ENCODE measurements at regions of chr12 and their contacts with region 1.

Region 1: GRCh38 chr12:38324896-38325295 is 8.3 kb downstream of the ALG10B start:
- DNase-seq: no peak
- H3K4me3 ChIP-seq: no peak overlapping the region
- H3K27ac ChIP-seq: no peak overlapping the region
- H3K4me1 ChIP-seq: no peaks in the 10 kb centered on the region
- H3K27me3 ChIP-seq: no peaks in the 10 kb centered on the region
- CTCF ChIP-seq: no peak
- POLR2A ChIP-seq: no peak

Region 2: DNA sequence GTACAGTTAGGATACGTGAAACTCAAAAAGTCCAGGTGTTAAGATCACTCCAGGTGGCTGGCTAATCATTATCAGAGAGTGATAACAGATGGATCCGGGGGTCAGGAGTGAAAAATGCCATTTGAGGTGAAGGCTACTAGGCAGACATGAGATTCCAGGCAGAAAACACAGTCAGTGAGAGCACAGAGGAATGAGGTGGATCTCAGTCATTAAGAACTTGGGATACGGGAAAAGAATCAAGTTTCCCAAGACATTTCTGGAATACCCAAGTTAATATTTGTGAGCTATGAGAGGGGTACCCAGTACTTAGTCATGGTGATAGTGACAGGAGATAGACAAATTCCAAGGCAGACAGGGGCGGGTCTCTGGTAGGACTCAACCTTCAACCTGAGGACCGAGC is 102.9 kb before region 1 on chr12:
- intact Hi-C with region 1: no loop called
- DNase-seq: no peak
- H3K4me3 ChIP-seq: no peak overlapping the region
- H3K27ac ChIP-seq: no peak overlapping the region
- H3K4me1 ChIP-seq: no peaks in the 10 kb centered on the region
- H3K27me3 ChIP-seq: no peaks in the 10 kb centered on the region
- CTCF ChIP-seq: no peak
- POLR2A ChIP-seq: no peak

Region 3: GRCh38 chr12:39103552-39104165 is 778.8 kb after region 1 on chr12:
- intact Hi-C with region 1: loop called (anchors 5 kb)
- DNase-seq: peak; percentile 40
- H3K4me3 ChIP-seq: no peak overlapping the region
- H3K27ac ChIP-seq: no peak overlapping the region
- H3K4me1 ChIP-seq: no peaks in the 10 kb centered on the region
- H3K27me3 ChIP-seq: no peaks in the 10 kb centered on the region
- CTCF ChIP-seq: peak; percentile 40 to 78 (median 63)
- POLR2A ChIP-seq: no peak

Region 4: DNA sequence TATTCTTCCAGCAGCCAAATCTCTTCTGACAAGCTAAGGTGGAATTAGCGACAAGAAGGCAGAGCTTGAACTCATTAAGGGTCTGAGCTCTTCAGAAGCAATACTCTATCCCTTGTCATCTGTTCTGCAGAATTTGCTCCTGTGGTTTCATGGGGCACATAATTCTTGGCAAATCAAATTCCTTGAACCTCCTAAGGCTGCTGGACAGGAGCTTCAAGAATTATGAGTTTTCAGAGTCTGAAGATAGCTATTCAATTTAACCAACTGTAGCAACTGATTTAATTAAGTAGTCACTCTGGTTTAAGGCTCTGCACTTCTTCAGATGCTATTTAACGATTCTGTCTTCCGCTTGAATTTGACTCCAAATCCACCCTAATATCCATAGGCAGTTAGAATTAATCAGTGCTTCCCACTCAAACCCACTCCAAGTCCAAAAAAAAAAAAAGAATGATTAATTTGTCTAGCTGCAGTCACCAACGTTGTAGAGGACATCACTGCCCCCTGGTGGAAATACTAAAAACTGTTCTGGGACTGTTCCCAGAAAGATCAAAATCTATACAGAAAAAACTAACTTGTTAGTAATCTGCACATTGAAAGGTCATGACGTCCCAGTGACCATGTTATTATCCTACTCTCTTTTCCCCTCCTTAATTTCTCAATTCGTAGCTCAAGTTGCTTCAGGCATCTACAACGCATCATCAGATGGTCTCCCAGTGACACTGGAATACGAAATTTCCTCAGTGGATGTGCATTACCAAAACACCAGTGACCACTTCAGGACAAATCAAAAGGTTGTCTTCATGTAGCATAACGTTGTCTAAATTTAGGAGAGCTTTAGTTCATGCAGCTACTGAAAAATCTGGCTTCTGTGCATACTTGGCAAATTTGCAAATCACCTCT is 948.2 kb after region 1 on chr12:
- intact Hi-C with region 1: loop called (anchors 10 kb)
- DNase-seq: no peak
- H3K4me3 ChIP-seq: no peak overlapping the region
- H3K27ac ChIP-seq: no peak overlapping the region
- H3K4me1 ChIP-seq: no peaks in the 10 kb centered on the region
- H3K27me3 ChIP-seq: no peaks in the 10 kb centered on the region
- CTCF ChIP-seq: peak in 3 of 4 experiments; percentile 18 to 60 (median 39)
- POLR2A ChIP-seq: no peak